SK-N-SH (cell line): ENCODE measurements at regions of chr6 and their contacts with region 1.

Region 1: DNA sequence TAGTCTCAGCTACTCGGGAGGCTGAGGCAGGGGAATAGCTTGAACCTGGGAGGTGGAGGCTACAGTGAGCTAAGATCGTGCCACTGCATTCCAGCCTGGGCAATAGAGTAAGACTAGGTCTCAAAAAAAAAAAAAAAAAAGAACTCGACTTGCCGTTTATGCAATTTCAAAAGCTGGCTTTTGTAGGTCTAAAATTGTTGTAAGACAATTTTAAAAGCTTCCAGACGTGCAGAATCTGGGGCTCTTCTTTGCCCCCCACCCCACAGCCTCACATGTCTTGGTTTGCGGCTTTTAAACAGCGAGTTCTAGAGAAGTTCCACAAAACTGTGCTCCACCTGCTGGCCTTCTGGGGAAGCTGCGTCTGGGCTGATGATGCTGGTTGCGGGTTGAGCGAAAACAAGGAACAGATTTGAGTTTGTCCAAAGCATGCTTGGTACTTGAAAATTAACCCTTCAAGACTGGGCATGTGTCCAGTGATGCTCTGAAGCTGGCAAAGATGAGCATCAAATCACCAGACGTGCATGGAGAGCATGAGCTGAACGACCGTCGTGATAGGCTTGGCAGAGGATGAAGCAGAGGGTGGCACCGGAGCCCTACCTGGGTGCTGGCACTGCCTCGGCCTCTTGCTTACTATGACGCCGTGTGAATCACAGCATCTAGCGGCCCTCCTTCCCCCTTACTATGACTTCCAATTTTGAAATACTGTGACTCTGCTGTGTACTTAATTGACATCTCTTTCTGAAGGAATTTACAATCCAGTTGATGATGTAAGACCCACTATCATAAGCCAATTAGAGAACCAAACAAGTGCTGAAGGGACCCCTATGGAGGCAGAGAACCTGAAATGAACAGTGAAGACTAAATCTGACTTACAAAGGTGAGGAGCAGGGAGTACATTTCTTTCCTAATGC is 171.4 kb downstream of the GMPR start:
- DNase-seq: peak; percentile 72
- H3K4me3 ChIP-seq: no peak overlapping the region; a peak in 1 of 4 replicates
- H3K27ac ChIP-seq: no peak overlapping the region; a peak in 1 of 4 replicates
- H3K4me1 ChIP-seq: peaks cover 0 to 11% of the 10 kb centered on the region in 2 experiments; a peak in 1 of 4 replicates
- H3K27me3 ChIP-seq: no peaks in the 10 kb centered on the region
- CTCF ChIP-seq: peak; percentile 93
- EP300 ChIP-seq: no peak
- RAD21 ChIP-seq: peak; percentile 86

Region 2: DNA sequence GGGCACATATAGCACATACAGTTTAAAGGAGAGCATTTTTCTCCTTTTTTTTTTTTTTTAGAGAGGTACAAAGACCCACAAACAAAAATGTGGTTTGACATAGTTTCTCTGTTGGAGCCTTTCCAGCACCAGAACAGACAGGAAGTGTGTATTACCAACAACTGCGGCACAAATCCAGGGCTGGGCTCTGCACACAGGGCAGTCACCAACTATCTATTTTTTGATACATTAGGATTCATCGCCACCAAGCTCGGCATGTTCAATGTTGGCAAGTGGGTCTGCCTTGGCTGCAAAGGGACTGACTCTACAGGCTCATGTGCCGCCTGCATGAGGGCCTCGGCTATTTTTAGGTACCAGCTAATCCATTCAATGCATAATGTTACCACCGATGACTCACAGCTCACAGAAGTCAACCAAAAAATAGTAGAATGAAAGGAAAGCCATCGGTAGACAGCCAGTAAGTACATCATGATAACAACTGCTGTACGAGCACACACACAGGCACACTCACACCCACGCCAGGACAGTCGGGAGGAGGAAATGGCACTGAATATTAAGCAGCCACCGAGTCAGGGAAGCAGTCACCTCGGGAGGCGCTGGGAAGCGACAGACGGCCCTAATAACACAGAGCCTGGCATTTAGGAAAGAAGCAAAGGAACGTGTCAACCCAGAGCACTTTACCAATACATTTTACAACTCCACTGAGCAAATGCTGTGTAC is 89.8 kb before region 1 on chr6:
- CTCF ChIA-PET with region 1: interaction called, 14 read pairs
- POLR2A ChIA-PET with region 1: no interaction called
- DNase-seq: no peak
- H3K4me3 ChIP-seq: peak overlapping the region; percentile 4 to 58; a peak in 3 of 4 replicates
- H3K27ac ChIP-seq: peak overlapping the region; percentile 56 to 94
- H3K4me1 ChIP-seq: peaks cover 13 to 57% of the 10 kb centered on the region in 2 experiments; a peak in 3 of 4 replicates
- H3K27me3 ChIP-seq: no peaks in the 10 kb centered on the region
- CTCF ChIP-seq: no peak
- EP300 ChIP-seq: no peak; a peak in 1 of 4 replicates
- RAD21 ChIP-seq: no peak

Region 3: DNA sequence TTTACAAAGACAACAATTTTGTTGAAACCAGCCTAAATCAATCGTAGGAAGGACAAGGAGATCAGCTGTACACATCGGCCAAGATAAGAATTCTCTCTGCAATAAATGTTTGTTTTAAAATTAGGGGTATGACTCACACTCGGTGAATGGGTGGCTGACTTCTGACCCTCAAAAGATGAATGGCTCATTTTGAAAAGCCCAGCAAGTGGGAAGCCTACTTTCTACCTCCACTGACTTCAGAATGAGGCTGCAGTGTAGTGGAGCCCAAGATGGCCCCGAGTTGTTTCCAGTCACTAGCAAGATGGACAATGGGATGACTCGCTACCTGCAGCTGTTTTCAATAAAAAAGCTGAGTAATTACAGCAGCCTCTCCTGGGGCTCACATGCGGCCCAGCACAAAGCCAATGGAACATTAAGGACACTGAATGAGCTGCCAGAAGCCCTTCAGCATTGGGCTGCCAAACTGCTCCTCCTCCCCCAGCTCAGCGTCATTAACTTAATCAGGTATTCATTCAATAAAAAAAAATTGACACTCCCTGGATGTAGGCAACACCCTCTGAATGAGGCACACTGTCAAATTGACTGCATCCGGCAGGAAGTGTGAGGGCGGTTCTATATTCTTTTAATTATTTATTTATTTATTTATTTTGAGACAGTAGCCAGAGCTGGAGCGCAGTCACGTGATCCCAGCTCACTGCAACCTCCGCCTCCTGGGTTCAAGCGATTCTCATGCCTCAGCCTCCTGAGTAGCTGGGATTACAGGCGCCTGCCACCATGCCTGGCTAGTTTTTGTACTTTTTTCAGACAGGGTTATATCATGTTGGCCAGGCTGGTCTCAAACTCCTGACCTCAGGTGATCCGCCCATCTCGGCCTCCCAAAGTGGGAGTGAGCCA is 64.1 kb before region 1 on chr6:
- CTCF ChIA-PET with region 1: interaction called, 19 read pairs
- POLR2A ChIA-PET with region 1: no interaction called
- DNase-seq: peak; percentile 78
- H3K4me3 ChIP-seq: no peak overlapping the region
- H3K27ac ChIP-seq: peak overlapping the region; percentile 78 to 93
- H3K4me1 ChIP-seq: peaks cover 17 to 19% of the 10 kb centered on the region in 2 experiments; a peak in 3 of 4 replicates
- H3K27me3 ChIP-seq: no peaks in the 10 kb centered on the region
- CTCF ChIP-seq: no peak
- EP300 ChIP-seq: peak; percentile 65 to 71; a peak in 3 of 4 replicates
- RAD21 ChIP-seq: no peak

Region 4: GRCh38 chr6:16367571-16367970 is 42.2 kb before region 1 on chr6:
- CTCF ChIA-PET with region 1: interaction called, 12 read pairs
- POLR2A ChIA-PET with region 1: no interaction called
- DNase-seq: no peak
- H3K4me3 ChIP-seq: no peak overlapping the region
- H3K27ac ChIP-seq: peak overlapping the region in 1 of 2 experiments; percentile 80; a peak in 2 of 4 replicates
- H3K4me1 ChIP-seq: peaks cover 0 to 43% of the 10 kb centered on the region in 2 experiments; a peak in 2 of 4 replicates
- H3K27me3 ChIP-seq: no peaks in the 10 kb centered on the region
- CTCF ChIP-seq: no peak
- EP300 ChIP-seq: no peak
- RAD21 ChIP-seq: no peak

Region 5: GRCh38 chr6:16420715-16421461 is 11.1 kb after region 1 on chr6:
- CTCF ChIA-PET with region 1: interaction called, 21 read pairs
- POLR2A ChIA-PET with region 1: no interaction called
- DNase-seq: no peak
- H3K4me3 ChIP-seq: no peak overlapping the region
- H3K27ac ChIP-seq: 0 out of 4 replicates have a peak overlapping the region, but pooled peaks of 1 of the 2 experiments have one; percentile 14
- H3K4me1 ChIP-seq: peaks cover 0 to 10% of the 10 kb centered on the region in 2 experiments; a peak in 1 of 4 replicates
- H3K27me3 ChIP-seq: no peaks in the 10 kb centered on the region
- CTCF ChIP-seq: no peak
- EP300 ChIP-seq: no peak
- RAD21 ChIP-seq: no peak

Region 6: DNA sequence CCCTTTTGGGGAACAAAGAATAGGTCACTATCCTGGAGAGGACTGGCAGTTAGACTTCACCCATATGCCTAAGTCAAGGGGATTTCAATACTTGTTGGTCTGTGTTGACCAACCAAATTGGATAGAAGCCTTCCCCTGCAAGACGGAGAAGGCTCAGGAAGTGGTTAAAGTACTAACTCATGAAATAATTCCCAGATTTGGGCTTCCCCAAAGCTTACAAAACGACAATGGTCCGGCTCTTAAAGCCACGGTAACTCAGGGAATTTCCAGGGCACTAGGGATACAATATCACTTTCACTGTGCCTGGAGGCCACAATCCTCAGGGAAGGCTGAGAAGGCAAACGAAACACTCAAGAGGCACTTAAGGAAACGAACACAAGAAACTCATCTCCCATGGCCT is 51.7 kb after region 1 on chr6:
- CTCF ChIA-PET with region 1: no interaction called
- POLR2A ChIA-PET with region 1: no interaction called
- DNase-seq: no peak
- H3K4me3 ChIP-seq: no peak overlapping the region
- H3K27ac ChIP-seq: no peak overlapping the region
- H3K4me1 ChIP-seq: no peaks in the 10 kb centered on the region
- H3K27me3 ChIP-seq: no peaks in the 10 kb centered on the region
- CTCF ChIP-seq: no peak
- EP300 ChIP-seq: no peak
- RAD21 ChIP-seq: no peak